ENCODE measurements at regions of chr11 and their contacts with region 1.

Region 1: DNA sequence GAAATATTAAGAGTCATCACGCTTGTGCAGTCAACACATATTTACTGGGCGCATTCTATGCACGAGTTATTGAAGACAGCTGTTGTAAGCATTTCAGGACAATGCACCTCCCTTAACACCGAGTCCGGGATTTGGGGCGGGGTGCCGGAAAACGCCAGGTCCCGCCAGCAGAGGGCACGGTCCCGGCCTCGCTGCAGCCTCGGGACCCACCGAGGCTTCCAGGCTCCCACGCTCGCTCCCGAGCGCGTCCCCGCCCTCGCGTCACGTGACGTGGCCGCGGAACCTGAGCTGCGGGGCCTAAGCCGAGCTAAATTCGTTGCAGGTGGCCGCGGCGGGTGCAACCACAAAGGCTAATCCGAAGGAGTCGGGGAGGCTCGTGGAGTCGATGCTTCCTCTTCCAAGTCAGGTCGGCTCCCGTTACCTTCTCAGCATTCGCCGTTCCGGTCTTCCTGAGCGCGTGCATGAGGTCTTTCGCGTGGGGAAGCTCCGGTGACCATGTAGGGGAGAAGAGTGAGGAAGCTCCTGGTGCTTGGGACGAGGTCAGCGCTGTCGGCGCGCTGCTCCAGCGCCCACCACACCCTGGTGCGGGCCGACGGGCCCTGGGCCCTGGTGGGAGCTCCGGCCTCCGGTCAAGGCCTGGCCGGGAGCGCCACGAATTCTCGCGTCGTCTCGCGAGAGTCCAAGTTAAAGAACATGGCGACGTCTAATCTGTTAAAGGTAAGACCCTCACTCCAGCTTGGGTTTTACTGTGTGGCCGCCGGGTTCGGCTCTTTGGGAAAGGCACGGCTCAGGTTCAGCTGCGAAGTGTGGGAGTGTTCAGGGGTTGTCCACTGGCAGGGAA is at the start of gene CUL5:
- DNase-seq: peak; percentile 95
- H3K4me3 ChIP-seq: peak within 1 kb of the TSS; percentile 85 to 92
- H3K27ac ChIP-seq: peak within 1 kb of the TSS; percentile 97 to 98
- H3K4me1 ChIP-seq: peaks cover 8 to 11% of the 10 kb centered on the region in 2 experiments; a peak in 3 of 4 replicates
- H3K27me3 ChIP-seq: no peaks in the 10 kb centered on the region
- CTCF ChIP-seq: peak; percentile 84
- EP300 ChIP-seq: no peak; a peak in 1 of 4 replicates
- RAD21 ChIP-seq: peak; percentile 63
- polyA plus RNA-seq, gene CUL5: 6.8 and 8.0 TPM in 2 replicates

Region 2: DNA sequence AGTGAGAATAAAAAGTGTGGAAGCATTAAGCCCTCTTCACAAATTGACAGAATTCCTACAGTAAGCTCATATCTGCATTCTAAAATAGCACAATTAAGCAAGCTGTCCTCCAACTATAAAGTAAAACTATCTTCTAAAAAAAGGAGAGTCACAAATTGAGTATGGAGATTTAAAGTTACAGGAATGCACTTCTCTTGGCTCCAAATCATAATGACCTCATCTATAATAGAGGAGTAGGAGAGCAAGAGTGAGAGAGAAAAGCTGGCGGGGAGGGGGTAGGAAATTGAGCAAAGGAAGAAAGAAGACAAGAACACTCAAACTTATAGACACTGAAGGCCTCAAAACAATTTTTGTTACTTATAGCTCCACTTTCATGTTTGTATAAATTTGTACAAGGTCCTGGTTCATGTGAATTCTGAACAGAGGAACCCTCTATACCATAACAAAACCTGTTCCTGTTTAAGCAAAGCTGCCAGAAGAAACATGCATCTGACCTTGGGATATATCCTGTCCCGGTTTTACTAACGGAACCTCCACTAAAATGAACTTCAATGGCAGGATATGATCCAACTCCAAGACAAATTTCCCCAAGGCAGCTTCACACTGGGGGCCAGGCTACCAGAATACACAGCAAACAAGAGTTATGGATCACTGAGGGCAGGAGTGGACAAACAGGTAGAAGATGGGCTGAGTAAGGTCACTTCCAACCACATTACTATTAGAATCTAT is 187.5 kb before region 1 on chr11:
- CTCF ChIA-PET with region 1: no interaction called
- POLR2A ChIA-PET with region 1: no interaction called
- DNase-seq: no peak
- H3K4me3 ChIP-seq: no peak overlapping the region; a peak in 1 of 4 replicates
- H3K27ac ChIP-seq: peak overlapping the region; percentile 8 to 21; a peak in 2 of 4 replicates
- H3K4me1 ChIP-seq: peaks cover 2 to 10% of the 10 kb centered on the region in 2 experiments; a peak in 2 of 4 replicates
- H3K27me3 ChIP-seq: no peaks in the 10 kb centered on the region
- CTCF ChIP-seq: no peak
- EP300 ChIP-seq: no peak
- RAD21 ChIP-seq: no peak

Region 3: DNA sequence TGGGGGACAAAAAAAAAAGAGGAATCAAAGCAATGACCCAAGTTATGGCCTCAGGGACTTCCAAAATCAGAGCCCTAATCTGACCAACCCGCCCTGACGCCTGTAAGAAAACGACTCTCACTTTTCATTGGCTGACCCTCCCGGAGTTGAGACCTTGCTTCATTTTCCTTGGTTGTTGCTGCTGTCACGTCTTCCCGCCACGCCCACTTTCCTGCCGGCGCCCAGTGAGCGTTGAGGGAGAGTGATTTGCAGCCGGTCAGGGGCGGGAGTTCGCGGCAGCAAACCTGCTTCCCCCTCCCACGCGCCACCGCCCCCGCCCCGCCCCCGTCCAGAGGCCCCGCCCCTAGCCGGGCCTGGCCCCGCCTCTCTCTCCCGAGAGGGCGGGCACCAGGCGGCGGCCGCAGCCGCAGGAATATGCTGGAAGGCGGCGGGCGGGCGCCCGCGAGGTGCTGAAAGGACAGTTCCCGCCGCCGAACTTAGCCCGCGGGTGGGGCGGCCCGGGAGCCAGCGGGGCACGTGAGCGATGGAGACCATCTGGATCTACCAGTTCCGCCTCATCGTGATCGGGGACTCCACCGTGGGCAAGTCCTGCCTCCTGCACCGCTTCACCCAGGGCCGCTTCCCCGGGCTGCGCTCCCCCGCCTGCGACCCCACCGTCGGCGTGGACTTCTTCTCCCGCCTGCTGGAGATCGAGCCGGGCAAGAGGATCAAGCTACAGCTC is 80.7 kb before region 1 on chr11 and contains the start of gene RAB39A:
- CTCF ChIA-PET with region 1: interaction called, 3 read pairs
- POLR2A ChIA-PET with region 1: interaction called, 13 read pairs
- DNase-seq: peak; percentile 99
- H3K4me3 ChIP-seq: peak within 1 kb of the TSS; percentile 61 to 69
- H3K27ac ChIP-seq: peak within 1 kb of the TSS in 1 of 2 experiments; percentile 87; a peak in 2 of 4 replicates
- H3K4me1 ChIP-seq: peaks cover 0 to 5% of the 10 kb centered on the region in 2 experiments; a peak in 2 of 4 replicates
- H3K27me3 ChIP-seq: peaks cover 8% of the 10 kb centered on the region; the same call in 1 of the 2 replicates
- CTCF ChIP-seq: no peak
- EP300 ChIP-seq: 0 out of 4 replicates have a peak, but pooled peaks of 1 of the 2 experiments have one; percentile 10
- RAD21 ChIP-seq: no peak; the same call in 1 of the 2 replicates
- polyA plus RNA-seq, gene RAB39A: 0.18 and 0.36 TPM in 2 replicates

Region 4: DNA sequence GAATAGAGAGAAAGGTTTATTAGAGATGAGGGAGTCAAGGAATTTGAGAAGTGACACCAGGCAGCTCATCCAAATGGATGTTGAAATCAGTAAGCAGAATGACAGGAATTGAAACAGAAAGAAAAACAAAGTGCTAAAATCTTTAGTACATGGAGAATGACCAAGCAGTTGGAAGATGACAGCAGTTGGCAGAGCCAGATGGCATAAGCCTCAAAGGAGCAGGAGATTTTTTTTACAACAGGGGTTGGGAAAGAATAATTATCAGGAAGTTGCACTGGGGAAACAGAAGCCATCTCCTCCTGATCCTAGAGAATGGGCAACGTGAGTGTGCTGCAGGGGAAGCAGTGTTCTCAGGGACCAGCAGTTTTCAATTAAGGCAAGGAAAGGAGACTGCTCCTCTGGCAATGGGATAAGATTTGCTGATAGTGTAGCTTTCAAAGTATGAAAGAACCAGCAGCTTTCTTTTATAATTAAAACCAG is 51.7 kb before region 1 on chr11:
- CTCF ChIA-PET with region 1: interaction called, 6 read pairs
- POLR2A ChIA-PET with region 1: interaction called, 12 read pairs
- DNase-seq: peak; percentile 78
- H3K4me3 ChIP-seq: peak overlapping the region in 1 of 2 experiments; percentile 19; a peak in 2 of 4 replicates
- H3K27ac ChIP-seq: peak overlapping the region; percentile 5 to 99; a peak in 3 of 4 replicates
- H3K4me1 ChIP-seq: peaks cover 14 to 38% of the 10 kb centered on the region in 2 experiments; a peak in 2 of 4 replicates
- H3K27me3 ChIP-seq: no peaks in the 10 kb centered on the region
- CTCF ChIP-seq: no peak
- EP300 ChIP-seq: peak in 1 of 2 experiments; percentile 96; a peak in 2 of 4 replicates
- RAD21 ChIP-seq: peak; percentile 46

Region 5: GRCh38 chr11:108206969-108207682 is 198.2 kb after region 1 on chr11:
- CTCF ChIA-PET with region 1: no interaction called
- POLR2A ChIA-PET with region 1: no interaction called
- DNase-seq: no peak
- H3K4me3 ChIP-seq: peak overlapping the region in 1 of 2 experiments; percentile 1; a peak in 1 of 4 replicates
- H3K27ac ChIP-seq: no peak overlapping the region
- H3K4me1 ChIP-seq: no peaks in the 10 kb centered on the region
- H3K27me3 ChIP-seq: no peaks in the 10 kb centered on the region
- CTCF ChIP-seq: no peak
- EP300 ChIP-seq: no peak
- RAD21 ChIP-seq: no peak

Measured in SK-N-SH (cell line).